Lower leg skin (tissue), 4 donors: ENCODE measurements at regions of chr14 and their contacts with region 1.

Region 1: DNA sequence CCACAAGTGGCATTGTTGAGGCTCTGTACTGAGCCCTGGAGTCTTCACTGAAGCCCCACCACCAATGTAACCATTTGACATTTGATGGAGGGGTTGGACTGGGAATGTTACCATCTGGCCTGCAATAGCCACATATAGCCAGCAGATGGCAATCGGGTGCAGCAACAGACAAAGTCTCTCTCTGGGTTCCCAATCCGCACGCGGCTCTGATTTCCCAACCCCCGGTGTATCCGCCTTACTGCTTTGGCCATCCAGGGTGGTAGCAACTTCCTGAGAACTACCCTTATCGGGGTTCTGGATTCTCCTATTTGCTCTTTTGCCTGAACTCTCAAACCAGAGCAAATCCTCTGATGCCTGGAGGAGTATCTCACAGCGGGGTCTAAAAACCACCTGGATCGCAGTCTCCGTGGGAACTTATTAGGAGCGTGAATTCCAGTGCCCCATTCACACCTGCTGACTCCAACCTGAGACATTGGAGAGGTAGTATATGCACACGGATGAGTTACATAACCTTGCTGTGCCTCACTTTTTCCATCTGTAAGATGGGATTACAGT is 14.2 kb downstream of the VRTN start:
- DNase-seq: peak; percentile 75 to 96
- H3K4me3 ChIP-seq: no peak overlapping the region
- CTCF ChIP-seq: peak in 1 of 3 donors; percentile 89
- POLR2A ChIP-seq: no peak

Region 2: GRCh38 chr14:74488786-74489397 is 126.5 kb after region 1 on chr14:
- intact Hi-C with region 1: loop called (anchors 10 kb)
- DNase-seq: no peak
- H3K4me3 ChIP-seq: no peak overlapping the region
- CTCF ChIP-seq: no peak
- POLR2A ChIP-seq: no peak